ENCODE measurements at regions of chr1 and their contacts with region 1.

Region 1: DNA sequence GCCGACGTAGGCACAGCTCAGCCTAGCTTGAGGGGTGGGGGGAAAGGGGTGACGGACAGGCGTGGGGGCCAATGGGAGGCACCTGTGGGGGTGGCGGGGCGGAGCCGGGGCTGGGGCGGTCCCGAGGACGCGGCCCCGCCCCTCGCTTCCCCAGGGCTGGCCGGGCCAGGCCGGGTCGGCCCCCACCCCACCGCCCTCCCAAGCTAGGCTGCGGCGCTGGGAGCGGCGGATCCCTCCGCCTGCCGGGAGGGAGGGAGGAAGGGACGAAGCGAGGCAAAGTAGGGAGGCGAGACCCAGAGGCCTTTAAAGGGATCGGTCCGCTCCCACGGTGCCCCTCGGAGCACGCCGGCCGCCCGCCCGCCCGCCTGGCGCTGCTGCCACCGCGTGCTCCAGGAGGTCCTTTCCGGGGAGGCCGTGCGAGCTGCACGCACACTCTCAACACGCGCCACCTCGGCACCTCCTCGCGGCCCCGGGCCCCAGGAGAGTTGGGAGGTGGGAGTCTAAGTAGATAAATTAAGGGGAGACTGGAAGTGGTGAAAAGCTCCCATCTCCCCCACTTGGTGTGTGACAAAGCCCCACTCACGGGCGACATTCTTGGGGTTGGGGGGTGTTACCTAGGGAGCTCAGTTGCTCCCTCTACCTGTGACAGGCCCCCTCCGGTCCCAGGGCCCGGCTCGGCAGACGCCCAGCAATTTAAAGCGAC is 373 bp upstream of the MEF2D start:
- DNase-seq: peak; percentile 80
- ATAC-seq: peak; percentile 80
- H3K4me3 ChIP-seq: peak overlapping the region; percentile 75 to 97 (median 94)
- H3K27ac ChIP-seq: peak overlapping the region; percentile 89
- H3K4me1 ChIP-seq: peaks cover 81% of the 10 kb centered on the region
- H3K27me3 ChIP-seq: peaks cover 2 to 20% of the 10 kb centered on the region in 2 experiments; a peak in 4 of 5 replicates
- CTCF ChIP-seq: peak; percentile 75
- EP300 ChIP-seq: no peak
- POLR2A ChIP-seq: peak; percentile 67 to 71
- RAD21 ChIP-seq: no peak; the same call in 1 of the 2 replicates

Region 2: GRCh38 chr1:156456622-156457465 is 44.1 kb before region 1 on chr1:
- CTCF ChIA-PET with region 1: interaction called, 7 read pairs
- POLR2A ChIA-PET with region 1: interaction called, 93 read pairs
- in situ Hi-C with region 1: loop called (anchors 5 kb)
- intact Hi-C with region 1: loop called (anchors 1 kb)
- DNase-seq: peak; percentile 96
- ATAC-seq: peak; percentile 91
- H3K4me3 ChIP-seq: peak overlapping the region; percentile 54 to 75 (median 55); a peak in 5 of 6 replicates
- H3K27ac ChIP-seq: peak overlapping the region; percentile 85
- H3K4me1 ChIP-seq: peaks cover 60% of the 10 kb centered on the region
- H3K27me3 ChIP-seq: no peaks in the 10 kb centered on the region
- CTCF ChIP-seq: no peak
- EP300 ChIP-seq: no peak; a peak in 1 of 4 replicates
- POLR2A ChIP-seq: peak; percentile 60 to 64
- RAD21 ChIP-seq: peak; percentile 3; the same call in 1 of the 2 replicates

Region 3: GRCh38 chr1:156471496-156472490 is 29.2 kb before region 1 on chr1:
- CTCF ChIA-PET with region 1: no interaction called
- POLR2A ChIA-PET with region 1: interaction called, 19 read pairs
- in situ Hi-C with region 1: no loop called
- intact Hi-C with region 1: loop called (anchors 2 kb)
- DNase-seq: peak; percentile 97
- ATAC-seq: peak; percentile 94
- H3K4me3 ChIP-seq: peak overlapping the region in 1 of 3 experiments; percentile 21; a peak in 1 of 6 replicates
- H3K27ac ChIP-seq: peak overlapping the region; percentile 77
- H3K4me1 ChIP-seq: peaks cover 65% of the 10 kb centered on the region
- H3K27me3 ChIP-seq: no peaks in the 10 kb centered on the region
- CTCF ChIP-seq: peak; percentile 40
- EP300 ChIP-seq: peak; percentile 34 to 95; a peak in 3 of 4 replicates
- POLR2A ChIP-seq: no peak
- RAD21 ChIP-seq: peak; percentile 54

Region 4: DNA sequence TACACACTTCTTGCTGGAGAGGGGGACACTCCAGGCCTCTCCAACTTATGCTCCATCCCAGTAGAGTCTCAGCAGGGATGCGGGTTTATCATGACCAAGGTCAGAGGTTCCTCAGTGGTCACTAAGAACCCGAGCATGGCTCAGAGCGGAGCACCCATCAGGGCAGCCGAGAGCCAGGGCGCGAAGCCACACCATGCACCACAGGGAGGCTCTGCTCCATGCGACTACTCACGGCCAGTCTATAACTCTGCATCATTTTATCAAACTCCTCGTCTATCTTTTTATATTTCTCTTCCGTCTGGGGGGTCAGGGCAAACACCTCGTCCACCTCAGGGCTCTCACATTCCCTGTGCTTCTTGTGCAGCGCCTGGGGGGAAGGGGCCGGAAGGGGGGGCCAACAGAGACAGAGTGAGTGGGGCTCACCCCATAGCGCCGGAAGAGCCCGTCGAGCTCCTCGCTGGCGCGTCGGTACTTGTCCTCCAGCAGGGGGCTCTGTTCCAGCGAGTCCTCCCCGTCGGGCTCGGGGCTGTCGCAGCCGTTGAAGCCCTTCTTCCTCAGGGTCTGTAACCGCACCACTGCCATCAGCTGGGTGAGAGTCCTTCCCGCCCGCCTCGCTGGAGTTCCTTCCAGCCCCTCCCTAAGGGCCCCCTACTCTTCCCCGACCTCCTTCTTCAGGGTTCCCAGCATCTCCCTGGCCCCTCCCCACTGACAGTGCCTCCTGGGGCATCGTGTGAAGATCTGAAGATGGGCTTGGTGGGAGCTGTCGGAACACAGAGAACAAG is 20.3 kb before region 1 on chr1:
- CTCF ChIA-PET with region 1: interaction called, 3 read pairs
- POLR2A ChIA-PET with region 1: interaction called, 9 read pairs
- in situ Hi-C with region 1: no loop called
- intact Hi-C with region 1: loop called (anchors 2 kb)
- DNase-seq: no peak
- ATAC-seq: peak; percentile 55
- H3K4me3 ChIP-seq: no peak overlapping the region
- H3K27ac ChIP-seq: no peak overlapping the region
- H3K4me1 ChIP-seq: peaks cover 26% of the 10 kb centered on the region
- H3K27me3 ChIP-seq: no peaks in the 10 kb centered on the region
- CTCF ChIP-seq: peak; percentile 62
- EP300 ChIP-seq: no peak
- POLR2A ChIP-seq: no peak
- RAD21 ChIP-seq: no peak

Region 5: GRCh38 chr1:156583821-156584622 is 83.1 kb after region 1 on chr1:
- CTCF ChIA-PET with region 1: no interaction called
- POLR2A ChIA-PET with region 1: interaction called, 6 read pairs
- in situ Hi-C with region 1: no loop called
- intact Hi-C with region 1: loop called (anchors 5 kb)
- DNase-seq: peak; percentile 40
- ATAC-seq: no peak; the same call in 2 of the 3 replicates
- H3K4me3 ChIP-seq: no peak overlapping the region
- H3K27ac ChIP-seq: no peak overlapping the region
- H3K4me1 ChIP-seq: 0 out of 2 replicates have a peak, but pooled peaks cover 14% of the 10 kb centered on the region
- H3K27me3 ChIP-seq: peaks cover 6 to 39% of the 10 kb centered on the region in 2 experiments; a peak in 4 of 5 replicates
- CTCF ChIP-seq: peak; percentile 76
- EP300 ChIP-seq: no peak
- POLR2A ChIP-seq: no peak
- RAD21 ChIP-seq: no peak

Measured in HepG2 (cell line).